ENCODE measurements at regions of chr5 and their contacts with region 1.

Region 1: DNA sequence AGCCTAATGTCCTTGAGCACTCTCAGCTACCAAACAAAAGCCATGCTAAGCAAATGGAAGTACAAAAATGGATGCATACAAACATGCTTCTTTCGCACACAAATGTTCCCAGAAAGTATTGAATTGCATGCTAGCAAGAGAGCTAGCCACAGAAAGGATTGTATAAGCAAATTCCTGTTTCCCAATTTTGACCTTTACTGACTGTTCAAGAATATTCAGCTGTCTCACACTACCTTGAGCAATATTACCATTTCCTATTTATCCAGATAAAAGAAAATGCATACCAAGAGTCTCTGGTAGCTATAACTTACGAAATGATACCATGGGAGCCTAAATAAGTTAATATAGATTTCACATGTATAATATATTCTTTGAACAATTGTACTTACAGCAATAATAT is 264.6 kb downstream of the TMEM167A start:
- DNase-seq: no peak
- H3K4me3 ChIP-seq: no peak overlapping the region
- H3K27ac ChIP-seq: no peak overlapping the region
- H3K4me1 ChIP-seq: peaks cover 8% of the 10 kb centered on the region
- H3K27me3 ChIP-seq: no peaks in the 10 kb centered on the region
- CTCF ChIP-seq: no peak

Region 2: GRCh38 chr5:82664732-82665131 is 147.8 kb before region 1 on chr5:
- CTCF ChIA-PET with region 1: no interaction called
- POLR2A ChIA-PET with region 1: no interaction called
- intact Hi-C with region 1: no loop called
- DNase-seq: no peak
- H3K4me3 ChIP-seq: no peak overlapping the region
- H3K27ac ChIP-seq: no peak overlapping the region
- H3K4me1 ChIP-seq: peaks cover 3% of the 10 kb centered on the region
- H3K27me3 ChIP-seq: peaks cover 13% of the 10 kb centered on the region
- CTCF ChIP-seq: no peak

Region 3: GRCh38 chr5:82822637-82822932 is 10.0 kb after region 1 on chr5:
- CTCF ChIA-PET with region 1: no interaction called
- POLR2A ChIA-PET with region 1: no interaction called
- intact Hi-C with region 1: no loop called
- DNase-seq: no peak
- H3K4me3 ChIP-seq: no peak overlapping the region
- H3K27ac ChIP-seq: no peak overlapping the region
- H3K4me1 ChIP-seq: peaks cover 15% of the 10 kb centered on the region
- H3K27me3 ChIP-seq: no peaks in the 10 kb centered on the region
- CTCF ChIP-seq: no peak

Region 4: GRCh38 chr5:83026930-83027687 is 214.5 kb after region 1 on chr5:
- CTCF ChIA-PET with region 1: no interaction called
- POLR2A ChIA-PET with region 1: interaction called, 11 read pairs
- intact Hi-C with region 1: no loop called
- DNase-seq: no peak
- H3K4me3 ChIP-seq: no peak overlapping the region
- H3K27ac ChIP-seq: no peak overlapping the region
- H3K4me1 ChIP-seq: no peaks in the 10 kb centered on the region
- H3K27me3 ChIP-seq: no peaks in the 10 kb centered on the region
- CTCF ChIP-seq: no peak

Measured in A673 (cell line).